ENCODE measurements at regions of chr10 and their contacts with region 1.

Region 1: GRCh38 chr10:71319042-71319799 is at the start of gene SLC29A3:
- DNase-seq: peak; percentile 74 to 85
- ATAC-seq: peak; percentile 89 to 95 (median 92)
- H3K4me3 ChIP-seq: peak within 1 kb of the TSS; percentile 54 to 84 (median 68)
- H3K27ac ChIP-seq: peak within 1 kb of the TSS in 9 of 10 donors; percentile 17 to 86 (median 68)
- H3K4me1 ChIP-seq: peaks cover 3 to 33% (median 12%) of the 10 kb centered on the region in 9 donors
- H3K27me3 ChIP-seq: no peaks in the 10 kb centered on the region
- CTCF ChIP-seq: peak; percentile 34 to 74 (median 55)
- total RNA-seq, gene SLC29A3: 0.89 to 3.5 (median 1.2) TPM

Region 2: GRCh38 chr10:70803775-70804420 is 515.3 kb before region 1 on chr10:
- intact Hi-C with region 1: no loop called
- DNase-seq: no peak
- ATAC-seq: peak in 6 of 8 donors; percentile 20 to 74 (median 38)
- H3K4me3 ChIP-seq: no peak overlapping the region
- H3K27ac ChIP-seq: no peak overlapping the region
- H3K4me1 ChIP-seq: peaks cover 0 to 5% (median 0%) of the 10 kb centered on the region in 9 donors
- H3K27me3 ChIP-seq: no peaks in the 10 kb centered on the region
- CTCF ChIP-seq: no peak

Region 3: GRCh38 chr10:71378336-71379117 is 59.3 kb after region 1 on chr10:
- intact Hi-C with region 1: loop called in 8 of 10 experiments (anchors 1 to 10 kb)
- DNase-seq: no peak
- ATAC-seq: no peak
- H3K4me3 ChIP-seq: no peak overlapping the region
- H3K27ac ChIP-seq: peak overlapping the region in 2 of 10 donors; percentile 64 to 90
- H3K4me1 ChIP-seq: peaks cover 0 to 37% (median 7%) of the 10 kb centered on the region in 9 donors
- H3K27me3 ChIP-seq: peaks cover 0 to 3% (median 0%) of the 10 kb centered on the region in 7 donors
- CTCF ChIP-seq: no peak

Region 4: GRCh38 chr10:71475243-71475871 is 156.1 kb after region 1 on chr10:
- intact Hi-C with region 1: loop called in 3 of 10 experiments (anchors 5 to 10 kb)
- DNase-seq: peak in 1 of 2 donors; percentile 40
- ATAC-seq: peak; percentile 8 to 43 (median 32)
- H3K4me3 ChIP-seq: peak overlapping the region in 1 of 10 donors; percentile 20
- H3K27ac ChIP-seq: peak overlapping the region in 9 of 10 donors; percentile 32 to 70 (median 53)
- H3K4me1 ChIP-seq: peaks cover 15 to 84% (median 61%) of the 10 kb centered on the region in 9 donors
- H3K27me3 ChIP-seq: no peaks in the 10 kb centered on the region
- CTCF ChIP-seq: no peak

Region 5: GRCh38 chr10:71608819-71609768 is 289.9 kb after region 1 on chr10:
- intact Hi-C with region 1: loop called in 2 of 10 experiments (anchors 10 kb)
- DNase-seq: peak; percentile 82
- ATAC-seq: peak in 6 of 8 donors; percentile 19 to 61 (median 51)
- H3K4me3 ChIP-seq: no peak overlapping the region
- H3K27ac ChIP-seq: no peak overlapping the region
- H3K4me1 ChIP-seq: peaks cover 8 to 26% (median 16%) of the 10 kb centered on the region in 9 donors
- H3K27me3 ChIP-seq: no peaks in the 10 kb centered on the region
- CTCF ChIP-seq: peak; percentile 69 to 83 (median 82)

Region 6: DNA sequence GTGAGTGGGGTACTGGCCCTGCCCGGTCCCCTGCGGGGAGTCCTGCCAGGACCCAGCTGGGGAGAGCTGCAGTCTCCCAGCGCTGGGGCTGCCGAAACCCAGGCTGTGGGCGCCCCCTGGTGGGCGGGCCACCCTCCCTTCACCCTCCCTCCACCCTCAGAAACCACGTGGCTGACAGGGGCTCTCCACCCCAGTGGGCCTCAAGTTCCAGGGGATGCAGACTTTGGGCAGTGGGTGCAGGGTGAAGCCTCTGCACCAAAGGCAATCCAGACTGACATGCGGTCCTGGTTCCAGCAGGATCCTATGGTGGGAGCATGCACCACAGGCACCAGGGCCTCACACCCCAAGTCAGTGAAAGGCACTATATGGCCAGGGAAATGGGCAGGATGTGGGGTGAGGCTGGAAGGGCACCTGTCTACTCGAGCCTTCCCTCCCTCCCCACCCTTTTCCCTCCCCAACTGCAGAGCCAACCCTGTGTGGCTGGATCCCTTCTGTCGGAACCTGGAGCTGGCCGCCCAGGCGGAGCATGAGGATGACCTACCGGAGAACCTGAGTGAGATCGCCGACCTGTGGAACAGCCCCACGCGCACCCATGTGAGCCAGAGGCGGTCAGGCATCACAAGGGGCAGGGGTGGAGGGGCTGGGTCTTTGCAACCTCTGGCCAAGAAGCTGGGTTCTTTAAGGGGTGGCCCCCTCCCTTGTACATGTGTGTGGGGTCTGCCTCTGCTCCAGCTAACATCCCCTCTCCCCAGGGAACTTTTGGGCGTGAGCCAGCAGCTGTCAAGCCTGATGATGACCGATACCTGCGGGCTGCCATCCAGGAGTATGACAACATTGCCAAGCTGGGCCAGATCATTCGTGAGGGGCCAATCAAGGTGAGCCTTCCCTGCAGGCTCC is 493.0 kb after region 1 on chr10:
- intact Hi-C with region 1: loop called in 7 of 10 experiments (anchors 5 to 10 kb)
- DNase-seq: peak; percentile 54 to 81
- ATAC-seq: peak; percentile 77 to 87 (median 84)
- H3K4me3 ChIP-seq: no peak overlapping the region
- H3K27ac ChIP-seq: no peak overlapping the region
- H3K4me1 ChIP-seq: peaks cover 5 to 34% (median 14%) of the 10 kb centered on the region in 9 donors
- H3K27me3 ChIP-seq: peaks cover 0 to 14% (median 0%) of the 10 kb centered on the region in 7 donors
- CTCF ChIP-seq: peak; percentile 63 to 93 (median 82)